CD4-positive, alpha-beta memory T cell (primary cell): ENCODE measurements at regions of chr1 and their contacts with region 1.

Region 1: DNA sequence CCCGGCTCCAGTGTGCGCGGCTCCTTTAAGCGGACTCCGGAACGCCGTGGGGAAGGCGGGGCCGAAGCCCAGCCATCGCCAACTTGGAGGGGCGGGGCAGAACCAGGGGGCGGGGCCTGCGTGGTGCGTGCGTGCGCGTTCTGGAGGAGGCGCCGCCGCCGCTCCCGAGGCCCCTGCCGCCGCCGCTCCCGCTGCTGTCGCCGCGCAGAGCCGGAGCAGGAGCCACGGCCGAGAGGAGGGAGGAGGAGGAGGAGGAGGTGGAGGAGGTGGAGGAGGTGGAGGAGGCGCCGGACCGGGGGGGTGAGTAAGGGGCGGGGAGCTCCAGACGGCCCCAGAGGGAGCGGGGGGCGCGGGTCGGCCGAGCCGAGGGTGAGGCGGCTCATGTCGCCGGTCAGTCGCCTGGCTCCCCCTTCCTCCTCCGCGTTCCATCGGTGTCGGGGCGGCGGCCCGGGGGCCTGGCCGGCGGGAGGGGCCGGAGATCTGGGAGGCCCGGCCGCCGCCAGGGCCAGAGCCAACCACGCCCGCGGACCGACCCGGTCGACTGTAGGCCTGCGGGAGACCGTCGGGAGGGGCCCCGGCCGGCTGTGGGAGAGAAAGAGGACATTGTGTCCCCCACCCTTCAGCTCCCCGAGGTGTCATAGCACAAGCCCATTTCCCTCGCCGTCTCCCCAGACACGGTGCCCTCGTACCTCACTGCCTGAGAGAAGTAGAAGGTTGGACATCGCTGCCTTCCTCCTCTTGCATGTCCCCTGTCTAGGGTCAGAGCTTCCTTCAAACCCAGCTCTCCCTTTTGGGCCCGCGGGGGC is at the start of gene RAP1A:
- DNase-seq: peak; percentile 88 to 91 (median 88)
- H3K4me3 ChIP-seq: peak within 1 kb of the TSS; percentile 79 to 90
- H3K4me3 Mint-ChIP-seq: peak within 1 kb of the TSS; percentile 95 to 100 (median 98)
- H3K27ac ChIP-seq: peak within 1 kb of the TSS; percentile 84
- H3K27ac Mint-ChIP-seq: peak within 1 kb of the TSS; percentile 93 to 98 (median 97)
- H3K4me1 ChIP-seq: peaks cover 81% of the 10 kb centered on the region
- H3K4me1 Mint-ChIP-seq: peaks cover 59 to 83% (median 71%) of the 10 kb centered on the region in 4 donors
- H3K27me3 ChIP-seq: no peaks in the 10 kb centered on the region
- H3K27me3 Mint-ChIP-seq: no peaks in the 10 kb centered on the region
- total RNA-seq, gene RAP1A: 130 to 134 TPM

Region 2: GRCh38 chr1:111516005-111516535 is 103.8 kb before region 1 on chr1:
- CTCF ChIA-PET with region 1: interaction called, 7 read pairs
- POLR2A ChIA-PET with region 1: interaction called, 16 read pairs
- intact Hi-C with region 1: no loop called
- DNase-seq: peak in 4 of 5 donors; percentile 28 to 42 (median 38)
- H3K4me3 ChIP-seq: no peak overlapping the region
- H3K4me3 Mint-ChIP-seq: peak overlapping the region; percentile 49 to 84 (median 75)
- H3K27ac ChIP-seq: no peak overlapping the region
- H3K27ac Mint-ChIP-seq: peak overlapping the region; percentile 46 to 87 (median 75)
- H3K4me1 ChIP-seq: peaks cover 66% of the 10 kb centered on the region
- H3K4me1 Mint-ChIP-seq: peaks cover 28 to 47% (median 36%) of the 10 kb centered on the region in 4 donors
- H3K27me3 ChIP-seq: no peaks in the 10 kb centered on the region
- H3K27me3 Mint-ChIP-seq: no peaks in the 10 kb centered on the region

Region 3: GRCh38 chr1:111592389-111593361 is 27.2 kb before region 1 on chr1:
- CTCF ChIA-PET with region 1: interaction called, 14 read pairs
- POLR2A ChIA-PET with region 1: interaction called, 244 read pairs
- intact Hi-C with region 1: loop called (anchors 1 kb)
- DNase-seq: peak; percentile 66 to 98 (median 77)
- H3K4me3 ChIP-seq: peak overlapping the region in 1 of 2 donors; percentile 15
- H3K4me3 Mint-ChIP-seq: peak overlapping the region; percentile 6 to 81 (median 69)
- H3K27ac ChIP-seq: peak overlapping the region; percentile 46
- H3K27ac Mint-ChIP-seq: peak overlapping the region; percentile 85 to 94 (median 92)
- H3K4me1 ChIP-seq: peaks cover 68% of the 10 kb centered on the region
- H3K4me1 Mint-ChIP-seq: peaks cover 48 to 57% (median 51%) of the 10 kb centered on the region in 4 donors
- H3K27me3 ChIP-seq: no peaks in the 10 kb centered on the region
- H3K27me3 Mint-ChIP-seq: no peaks in the 10 kb centered on the region

Region 4: GRCh38 chr1:111633736-111634247 is 14.0 kb after region 1 on chr1:
- CTCF ChIA-PET with region 1: no interaction called
- POLR2A ChIA-PET with region 1: interaction called, 19 read pairs
- intact Hi-C with region 1: loop called (anchors 1 kb)
- DNase-seq: no peak
- H3K4me3 ChIP-seq: peak overlapping the region in 1 of 2 donors; percentile 1
- H3K4me3 Mint-ChIP-seq: peak overlapping the region in 6 of 8 donors; percentile 4 to 70 (median 36)
- H3K27ac ChIP-seq: no peak overlapping the region
- H3K27ac Mint-ChIP-seq: peak overlapping the region in 3 of 7 donors; percentile 11 to 74 (median 67)
- H3K4me1 ChIP-seq: peaks cover 92% of the 10 kb centered on the region
- H3K4me1 Mint-ChIP-seq: peaks cover 60 to 89% (median 79%) of the 10 kb centered on the region in 4 donors
- H3K27me3 ChIP-seq: no peaks in the 10 kb centered on the region
- H3K27me3 Mint-ChIP-seq: no peaks in the 10 kb centered on the region

Region 5: GRCh38 chr1:111690306-111690617 is 70.4 kb after region 1 on chr1:
- CTCF ChIA-PET with region 1: no interaction called
- POLR2A ChIA-PET with region 1: interaction called, 3 read pairs
- intact Hi-C with region 1: loop called (anchors 10 kb)
- DNase-seq: no peak
- H3K4me3 ChIP-seq: no peak overlapping the region
- H3K4me3 Mint-ChIP-seq: peak overlapping the region in 2 of 8 donors; percentile 4 to 61
- H3K27ac ChIP-seq: no peak overlapping the region
- H3K27ac Mint-ChIP-seq: peak overlapping the region; percentile 2 to 76 (median 32)
- H3K4me1 ChIP-seq: peaks cover 54% of the 10 kb centered on the region
- H3K4me1 Mint-ChIP-seq: peaks cover 46 to 78% (median 67%) of the 10 kb centered on the region in 4 donors
- H3K27me3 ChIP-seq: no peaks in the 10 kb centered on the region
- H3K27me3 Mint-ChIP-seq: no peaks in the 10 kb centered on the region